SK-N-SH (cell line): ENCODE measurements at regions of chr5 and their contacts with region 1.

Region 1: DNA sequence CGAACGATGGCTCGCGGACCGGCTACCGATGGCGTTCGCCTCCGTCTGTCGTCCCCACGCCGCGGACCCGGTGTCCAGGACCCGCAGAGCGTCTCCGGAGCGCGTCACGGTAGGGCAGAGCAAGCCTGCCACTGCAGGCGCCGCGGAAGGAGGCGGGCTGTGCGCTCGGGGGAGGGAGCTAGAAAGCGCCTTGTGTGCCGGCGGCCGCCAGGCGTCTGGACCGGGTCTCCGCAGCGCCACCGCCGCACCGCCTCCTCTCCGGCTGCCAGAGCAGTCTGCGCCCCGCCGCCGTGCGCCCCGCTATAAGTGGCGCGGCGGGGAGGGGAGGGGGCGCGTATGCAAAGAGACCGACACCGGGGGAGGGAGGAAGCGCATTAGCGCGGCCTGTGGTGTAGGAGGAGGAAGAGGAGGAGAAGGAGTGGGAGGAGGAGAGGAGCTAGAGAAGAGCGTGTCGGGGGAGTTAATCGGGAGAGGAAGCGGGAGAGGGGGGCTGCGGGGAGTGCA is at the start of gene ENC1:
- DNase-seq: peak; percentile 88
- H3K4me3 ChIP-seq: peak within 1 kb of the TSS; percentile 84 to 87
- H3K27ac ChIP-seq: peak within 1 kb of the TSS; percentile 90 to 94
- H3K4me1 ChIP-seq: peaks cover 22 to 24% of the 10 kb centered on the region in 2 experiments
- H3K27me3 ChIP-seq: no peaks in the 10 kb centered on the region
- CTCF ChIP-seq: peak; percentile 44
- EP300 ChIP-seq: peak in 1 of 2 experiments; percentile 30; a peak in 1 of 4 replicates
- RAD21 ChIP-seq: peak; percentile 44; the same call in 1 of the 2 replicates
- polyA plus RNA-seq, gene ENC1: 20.3 and 23.9 TPM in 2 replicates

Region 2: DNA sequence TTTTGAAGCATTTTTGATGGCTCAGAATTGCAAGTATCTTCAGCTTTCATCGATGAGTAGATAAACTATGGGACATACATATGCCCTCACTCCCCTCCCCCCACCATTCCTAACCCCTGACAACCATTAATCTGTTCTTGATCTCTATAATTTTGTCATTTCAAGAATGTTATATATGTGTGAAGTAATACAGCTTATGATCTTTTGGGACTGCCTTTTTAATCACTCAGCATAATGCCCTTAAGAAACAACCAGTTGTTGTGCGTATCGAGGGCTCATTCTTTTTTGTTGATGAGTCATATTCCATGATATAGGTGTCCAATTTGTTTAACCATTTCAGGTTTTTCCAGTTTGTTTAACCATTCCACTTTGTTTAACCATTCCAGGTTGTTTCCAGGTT is 939.0 kb before region 1 on chr5:
- CTCF ChIA-PET with region 1: no interaction called
- POLR2A ChIA-PET with region 1: no interaction called
- DNase-seq: no peak
- H3K4me3 ChIP-seq: no peak overlapping the region
- H3K27ac ChIP-seq: no peak overlapping the region
- H3K4me1 ChIP-seq: no peaks in the 10 kb centered on the region; a peak in 2 of 4 replicates
- H3K27me3 ChIP-seq: no peaks in the 10 kb centered on the region
- CTCF ChIP-seq: no peak
- EP300 ChIP-seq: no peak
- RAD21 ChIP-seq: no peak

Region 3: GRCh38 chr5:73902327-73903051 is 738.0 kb before region 1 on chr5:
- CTCF ChIA-PET with region 1: interaction called, 124 read pairs
- POLR2A ChIA-PET with region 1: no interaction called
- DNase-seq: peak; percentile 58
- H3K4me3 ChIP-seq: no peak overlapping the region; a peak in 1 of 4 replicates
- H3K27ac ChIP-seq: no peak overlapping the region; a peak in 1 of 4 replicates
- H3K4me1 ChIP-seq: peaks cover 0 to 28% of the 10 kb centered on the region in 2 experiments; a peak in 2 of 4 replicates
- H3K27me3 ChIP-seq: no peaks in the 10 kb centered on the region
- CTCF ChIP-seq: peak; percentile 87
- EP300 ChIP-seq: no peak
- RAD21 ChIP-seq: peak; percentile 94

Region 4: GRCh38 chr5:74035521-74035981 is 605.0 kb before region 1 on chr5:
- CTCF ChIA-PET with region 1: interaction called, 33 read pairs
- POLR2A ChIA-PET with region 1: no interaction called
- DNase-seq: no peak
- H3K4me3 ChIP-seq: no peak overlapping the region
- H3K27ac ChIP-seq: no peak overlapping the region
- H3K4me1 ChIP-seq: peaks cover 7 to 11% of the 10 kb centered on the region in 2 experiments; a peak in 3 of 4 replicates
- H3K27me3 ChIP-seq: no peaks in the 10 kb centered on the region
- CTCF ChIP-seq: peak; percentile 52
- EP300 ChIP-seq: no peak
- RAD21 ChIP-seq: peak; percentile 77

Region 5: DNA sequence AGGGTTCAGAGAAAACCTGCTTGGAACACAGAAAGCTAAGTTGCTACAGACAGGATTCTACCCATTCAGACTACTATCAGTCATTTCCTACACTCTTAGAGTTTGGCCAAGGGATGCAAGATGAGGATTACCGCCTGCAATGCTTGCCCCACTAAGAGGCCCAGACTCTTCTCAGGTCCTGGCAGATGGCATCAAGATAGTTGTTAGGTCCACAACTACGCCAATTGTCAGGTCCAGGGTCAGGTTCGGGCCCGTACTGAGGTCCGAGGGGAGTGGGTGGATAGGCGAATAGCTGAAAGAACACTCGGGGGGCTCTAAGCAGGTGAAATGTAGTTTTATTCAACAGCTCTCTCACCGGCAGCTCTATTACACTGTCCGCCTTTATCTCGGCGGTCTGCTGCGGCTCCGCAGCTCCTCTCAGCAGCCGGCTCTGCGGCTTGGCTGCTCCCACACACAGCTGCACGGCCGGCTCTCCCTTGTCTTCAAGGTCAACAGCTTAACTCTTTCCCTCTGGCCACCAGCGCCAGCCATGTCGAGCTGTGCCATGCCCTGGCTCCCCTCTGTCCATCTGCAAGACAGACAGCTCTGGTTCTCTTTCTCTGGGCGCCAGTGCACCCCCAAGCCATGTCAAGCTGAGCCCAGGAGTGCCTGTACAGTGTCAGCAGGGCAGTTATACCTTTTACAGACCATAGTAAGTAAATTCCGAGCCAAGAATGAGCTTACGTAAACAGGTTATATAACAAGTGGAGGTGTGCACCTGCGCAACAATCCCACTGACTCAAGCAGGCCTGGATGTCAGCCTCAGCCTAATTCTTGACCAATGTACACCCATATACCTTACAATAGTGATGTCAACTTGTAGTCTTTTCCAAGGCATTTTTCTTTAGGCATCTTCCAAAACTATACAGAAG is 24.0 kb before region 1 on chr5:
- CTCF ChIA-PET with region 1: interaction called, 19 read pairs
- POLR2A ChIA-PET with region 1: no interaction called
- DNase-seq: no peak
- H3K4me3 ChIP-seq: no peak overlapping the region
- H3K27ac ChIP-seq: no peak overlapping the region
- H3K4me1 ChIP-seq: no peaks in the 10 kb centered on the region; a peak in 1 of 4 replicates
- H3K27me3 ChIP-seq: no peaks in the 10 kb centered on the region
- CTCF ChIP-seq: no peak
- EP300 ChIP-seq: no peak
- RAD21 ChIP-seq: no peak

Region 6: GRCh38 chr5:74653991-74654390 is 13.5 kb after region 1 on chr5:
- CTCF ChIA-PET with region 1: interaction called, 16 read pairs
- POLR2A ChIA-PET with region 1: no interaction called
- DNase-seq: no peak
- H3K4me3 ChIP-seq: no peak overlapping the region
- H3K27ac ChIP-seq: no peak overlapping the region
- H3K4me1 ChIP-seq: peaks cover 0 to 2% of the 10 kb centered on the region in 2 experiments; a peak in 1 of 4 replicates
- H3K27me3 ChIP-seq: no peaks in the 10 kb centered on the region
- CTCF ChIP-seq: no peak
- EP300 ChIP-seq: no peak
- RAD21 ChIP-seq: no peak